CD4-positive, alpha-beta memory T cell (primary cell): ENCODE measurements at regions of chr1 and their contacts with region 1.

Region 1: DNA sequence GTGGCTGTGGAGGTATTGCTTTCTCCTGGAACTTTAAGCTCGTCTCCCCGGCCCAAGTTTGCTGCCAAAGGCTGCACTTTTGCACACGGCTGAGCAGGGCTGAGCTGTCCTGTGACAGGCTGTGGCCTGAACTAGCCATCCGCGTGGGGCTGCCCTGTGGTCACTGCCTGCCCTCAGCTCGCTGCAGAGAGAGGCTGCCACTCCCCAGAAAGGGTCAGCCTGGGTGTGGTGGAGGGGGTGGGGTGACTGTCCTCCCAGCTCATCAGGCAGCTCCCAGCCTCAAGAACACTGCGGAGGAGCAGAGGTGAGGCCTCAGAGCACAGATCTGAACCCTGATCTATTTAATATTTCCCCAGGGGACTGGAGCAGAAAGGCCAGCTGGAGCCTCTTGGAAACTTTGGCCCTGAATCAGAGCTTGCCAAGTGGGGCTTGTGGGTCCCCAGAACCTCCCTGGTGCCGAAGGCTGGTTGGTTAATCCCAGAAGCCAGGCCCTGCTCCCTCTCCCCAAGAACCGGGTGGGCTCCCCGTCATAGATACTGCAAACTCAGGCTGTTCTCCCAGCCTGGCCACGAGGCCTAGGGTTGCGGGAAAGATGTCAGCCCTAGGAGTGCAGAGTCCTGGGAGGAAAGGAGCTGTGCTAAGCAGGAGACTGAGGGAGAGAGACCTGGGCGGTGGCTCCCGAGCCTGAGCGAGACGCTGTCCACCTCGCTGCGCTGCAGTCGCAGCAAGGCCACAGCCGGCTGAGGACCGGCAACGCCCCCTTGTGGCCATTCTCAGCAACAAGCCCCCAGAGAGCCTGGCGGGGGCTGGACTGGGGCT is 125.1 kb upstream of the IPO9 start:
- DNase-seq: peak in 4 of 5 donors; percentile 35 to 42 (median 40)
- H3K4me3 ChIP-seq: no peak overlapping the region
- H3K4me3 Mint-ChIP-seq: no peak overlapping the region
- H3K27ac ChIP-seq: no peak overlapping the region
- H3K27ac Mint-ChIP-seq: no peak overlapping the region
- H3K4me1 ChIP-seq: peaks cover 4% of the 10 kb centered on the region
- H3K4me1 Mint-ChIP-seq: no peaks in the 10 kb centered on the region
- H3K27me3 ChIP-seq: no peaks in the 10 kb centered on the region
- H3K27me3 Mint-ChIP-seq: peaks cover 1 to 2% of the 10 kb centered on the region in 2 donors

Region 2: DNA sequence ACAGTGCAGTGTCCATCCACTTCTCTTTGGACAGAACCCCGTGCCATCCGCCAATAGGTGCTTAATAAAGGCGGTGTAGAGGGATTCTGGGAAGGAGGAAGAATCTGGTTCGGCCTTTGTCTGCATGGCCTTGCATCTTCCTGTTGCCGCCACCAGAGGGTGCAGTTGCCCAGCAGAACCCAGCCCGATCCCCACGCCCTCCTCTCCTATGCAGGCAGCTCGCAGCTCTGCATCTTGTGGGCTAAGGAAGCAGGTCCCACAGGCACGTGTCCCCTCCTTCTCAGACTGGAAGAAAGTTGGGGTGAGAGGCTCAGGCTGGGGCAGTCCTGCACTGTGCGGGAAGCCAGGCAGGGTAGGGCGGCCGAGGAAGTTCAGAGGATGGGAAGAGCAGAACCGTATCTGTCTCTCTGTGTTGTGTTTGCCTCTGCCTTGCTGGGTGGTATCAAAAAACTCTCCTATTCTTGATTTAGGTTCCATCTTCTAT is 144.1 kb before region 1 on chr1:
- CTCF ChIA-PET with region 1: interaction called, 24 read pairs
- POLR2A ChIA-PET with region 1: no interaction called
- intact Hi-C with region 1: no loop called
- DNase-seq: peak; percentile 42 to 54 (median 52)
- H3K4me3 ChIP-seq: no peak overlapping the region
- H3K4me3 Mint-ChIP-seq: no peak overlapping the region
- H3K27ac ChIP-seq: no peak overlapping the region
- H3K27ac Mint-ChIP-seq: peak overlapping the region in 1 of 7 donors; percentile 22
- H3K4me1 ChIP-seq: no peaks in the 10 kb centered on the region
- H3K4me1 Mint-ChIP-seq: peaks cover 0 to 5% (median 3%) of the 10 kb centered on the region in 4 donors
- H3K27me3 ChIP-seq: no peaks in the 10 kb centered on the region
- H3K27me3 Mint-ChIP-seq: no peaks in the 10 kb centered on the region

Region 3: DNA sequence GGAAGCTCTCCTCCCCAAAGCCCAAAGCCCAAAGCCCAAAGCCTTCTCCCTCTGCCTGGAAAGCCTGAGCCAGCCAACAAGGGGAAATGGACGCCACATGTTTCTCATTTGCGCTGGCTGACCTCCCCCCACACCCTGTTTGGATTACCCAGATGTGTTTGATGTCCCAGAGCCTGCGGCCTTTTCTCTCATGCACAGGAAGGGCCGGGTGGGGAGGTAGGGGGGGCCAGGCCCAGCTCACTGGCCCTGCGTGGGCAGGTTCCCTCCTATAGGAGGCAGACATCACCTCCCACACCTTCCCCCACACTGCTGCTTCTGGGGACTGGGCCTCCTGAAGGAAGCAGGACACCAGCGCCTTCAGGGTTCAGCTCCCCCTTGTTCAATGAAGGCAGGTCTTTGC is 48.6 kb before region 1 on chr1:
- CTCF ChIA-PET with region 1: no interaction called
- POLR2A ChIA-PET with region 1: no interaction called
- intact Hi-C with region 1: no loop called
- DNase-seq: no peak
- H3K4me3 ChIP-seq: no peak overlapping the region
- H3K4me3 Mint-ChIP-seq: no peak overlapping the region
- H3K27ac ChIP-seq: no peak overlapping the region
- H3K27ac Mint-ChIP-seq: peak overlapping the region in 1 of 7 donors; percentile 59
- H3K4me1 ChIP-seq: no peaks in the 10 kb centered on the region
- H3K4me1 Mint-ChIP-seq: peaks cover 0 to 2% (median 0%) of the 10 kb centered on the region in 4 donors
- H3K27me3 ChIP-seq: no peaks in the 10 kb centered on the region
- H3K27me3 Mint-ChIP-seq: peaks cover 10 to 12% of the 10 kb centered on the region in 2 donors

Region 4: GRCh38 chr1:201678264-201679101 is 25.3 kb before region 1 on chr1:
- CTCF ChIA-PET with region 1: no interaction called
- POLR2A ChIA-PET with region 1: no interaction called
- intact Hi-C with region 1: no loop called
- DNase-seq: no peak
- H3K4me3 ChIP-seq: no peak overlapping the region
- H3K4me3 Mint-ChIP-seq: no peak overlapping the region
- H3K27ac ChIP-seq: no peak overlapping the region
- H3K27ac Mint-ChIP-seq: peak overlapping the region in 1 of 7 donors; percentile 30
- H3K4me1 ChIP-seq: no peaks in the 10 kb centered on the region
- H3K4me1 Mint-ChIP-seq: peaks cover 0 to 1% (median 0%) of the 10 kb centered on the region in 4 donors
- H3K27me3 ChIP-seq: no peaks in the 10 kb centered on the region
- H3K27me3 Mint-ChIP-seq: peaks cover 10 to 11% of the 10 kb centered on the region in 2 donors